ENCODE measurements at regions of chr7 and their contacts with region 1.

Region 1: DNA sequence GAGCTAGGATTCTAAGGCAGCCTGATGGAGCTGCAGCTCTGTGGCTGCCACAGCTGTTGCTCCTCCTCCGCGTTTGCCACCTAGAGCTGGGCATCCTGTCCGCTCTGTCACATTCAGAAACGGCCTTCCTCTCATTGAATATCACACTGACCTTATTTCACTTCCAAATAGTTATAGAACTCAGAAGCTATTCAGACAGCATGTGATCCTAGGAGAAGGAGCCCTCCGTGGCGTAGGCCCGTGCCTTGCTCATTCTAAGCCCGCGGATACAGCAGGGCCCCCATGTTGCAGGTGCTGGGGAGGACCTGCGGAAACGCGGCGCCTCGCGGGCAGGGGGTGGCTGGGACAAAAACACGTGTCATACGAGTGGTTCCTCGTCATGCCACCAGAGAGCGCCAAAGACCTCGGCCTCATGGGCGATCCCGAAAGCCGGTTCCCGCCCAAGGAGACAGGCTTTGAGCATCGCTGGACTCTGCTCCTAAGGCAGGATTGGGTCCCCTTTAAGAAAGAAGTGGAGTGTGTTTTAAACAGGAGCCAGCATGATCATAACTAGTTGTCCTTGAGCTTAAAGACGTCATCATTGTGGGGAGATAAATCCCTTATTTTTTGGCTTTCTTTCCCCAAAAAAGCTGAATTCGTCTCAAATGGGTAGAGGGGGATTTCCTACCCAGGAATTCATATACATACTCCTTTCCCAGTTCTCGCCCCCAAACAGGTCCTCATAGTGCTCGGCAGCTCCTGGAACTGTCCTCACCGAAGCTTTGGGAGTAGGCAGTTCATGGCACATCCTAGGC is 17.9 kb upstream of the FIGNL1 start:
- DNase-seq: peak; percentile 73 to 81 (median 81)
- H3K4me3 ChIP-seq: peak overlapping the region in 2 of 7 experiments; percentile 36 to 65
- H3K27ac ChIP-seq: no peak overlapping the region
- H3K4me1 ChIP-seq: peaks cover 0 to 10% (median 6%) of the 10 kb centered on the region in 4 experiments
- H3K27me3 ChIP-seq: no peaks in the 10 kb centered on the region

Region 2: DNA sequence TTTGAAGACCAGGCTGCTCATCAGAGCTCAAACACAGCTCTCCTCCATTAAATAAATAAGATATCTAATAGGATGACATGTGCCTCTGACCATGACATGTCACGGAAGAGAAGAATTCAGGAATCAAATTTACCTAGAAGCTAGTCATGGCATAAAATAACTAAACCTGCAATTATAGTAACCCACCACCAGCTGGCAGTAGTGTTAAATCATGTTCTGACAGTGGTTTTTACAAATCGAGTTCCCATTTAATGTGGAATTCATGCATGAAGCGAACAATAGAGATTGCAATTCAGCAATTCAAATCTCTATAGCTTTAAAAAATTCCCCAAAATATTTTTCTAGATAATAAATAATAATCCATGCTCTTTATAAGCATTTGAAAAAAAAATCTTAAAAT is 238.1 kb before region 1 on chr7:
- CTCF ChIA-PET with region 1: no interaction called
- POLR2A ChIA-PET with region 1: no interaction called
- DNase-seq: peak; percentile 43 to 76 (median 72)
- H3K4me3 ChIP-seq: no peak overlapping the region
- H3K27ac ChIP-seq: no peak overlapping the region
- H3K4me1 ChIP-seq: peaks cover 15 to 34% (median 25%) of the 10 kb centered on the region in 4 experiments
- H3K27me3 ChIP-seq: no peaks in the 10 kb centered on the region

Region 3: DNA sequence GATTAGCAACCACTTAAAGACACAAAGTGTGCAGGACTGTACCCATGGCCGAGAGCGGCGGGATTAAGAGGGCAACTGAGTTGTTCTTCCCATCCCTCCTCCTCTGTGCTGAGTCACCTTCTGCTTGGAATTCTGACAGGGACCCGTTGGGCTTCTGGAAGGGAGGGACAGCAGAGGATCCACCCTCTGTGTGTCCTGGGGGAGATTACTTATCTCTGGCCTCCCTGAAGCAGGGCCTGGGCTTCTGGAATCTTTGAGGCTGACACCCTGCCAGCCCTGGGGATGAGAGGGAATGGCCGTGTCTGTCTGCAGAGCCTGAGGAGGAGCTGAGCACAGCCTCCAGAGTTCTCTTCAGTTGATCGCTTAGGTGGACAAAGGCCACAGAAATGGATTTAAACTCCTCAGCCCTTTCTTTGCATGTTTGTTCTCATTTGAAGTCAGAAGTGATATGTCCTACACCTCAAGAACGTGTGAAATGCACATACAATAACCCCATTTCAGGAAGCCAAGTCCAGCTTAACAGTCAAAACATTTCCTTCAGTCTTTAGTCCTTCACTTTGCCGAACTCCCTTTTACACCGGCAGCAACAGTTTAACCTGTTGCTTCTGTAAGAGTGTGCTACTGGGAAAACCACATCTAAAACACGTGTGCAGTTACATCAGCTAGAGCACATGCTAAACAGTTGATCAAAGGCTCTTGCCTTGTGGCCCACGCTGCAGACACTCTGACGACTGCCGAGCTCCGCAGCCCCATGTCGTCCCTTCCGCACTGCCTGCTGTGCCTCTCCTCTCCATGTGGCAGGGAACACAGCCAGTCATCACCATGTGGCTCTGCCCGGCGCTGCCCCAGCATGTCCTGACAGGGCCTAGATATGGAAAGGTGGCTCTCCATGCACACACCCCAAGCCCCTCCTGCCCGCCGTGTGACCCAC is 107.8 kb before region 1 on chr7:
- CTCF ChIA-PET with region 1: no interaction called
- POLR2A ChIA-PET with region 1: no interaction called
- DNase-seq: no peak
- H3K4me3 ChIP-seq: no peak overlapping the region
- H3K27ac ChIP-seq: peak overlapping the region in 1 of 2 experiments; percentile 74
- H3K4me1 ChIP-seq: peaks cover 19 to 95% (median 83%) of the 10 kb centered on the region in 4 experiments
- H3K27me3 ChIP-seq: no peaks in the 10 kb centered on the region

Region 4: DNA sequence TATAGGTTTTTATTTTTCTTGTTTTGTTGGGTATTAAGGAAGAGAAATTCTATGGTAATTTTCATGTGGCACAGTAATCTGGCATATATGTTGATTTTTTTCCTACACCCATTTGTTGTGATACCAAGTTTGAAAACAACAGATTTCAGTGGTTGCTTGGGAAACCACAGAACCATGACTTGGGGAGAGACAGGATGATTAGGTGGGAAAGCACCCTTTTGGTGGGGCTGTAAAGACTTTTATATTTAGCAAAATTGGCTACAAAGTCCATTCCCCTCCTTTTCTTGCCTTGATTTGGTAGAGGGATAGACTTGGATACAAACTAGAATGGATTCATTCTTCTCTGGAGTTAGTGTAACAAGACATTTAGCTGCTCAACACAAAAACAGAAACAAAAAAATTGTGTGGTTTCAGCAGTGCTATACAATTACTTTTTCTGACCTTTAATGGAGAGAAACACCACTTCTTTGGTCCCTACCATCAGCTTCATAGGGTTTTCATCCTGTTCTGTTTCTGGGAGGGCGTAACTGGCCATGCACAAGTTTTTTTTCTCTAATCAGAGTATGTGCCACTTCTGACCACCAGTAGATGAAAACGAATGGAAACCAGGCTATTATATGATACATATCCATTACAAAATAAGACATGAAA is 70.6 kb before region 1 on chr7:
- CTCF ChIA-PET with region 1: no interaction called
- POLR2A ChIA-PET with region 1: no interaction called
- DNase-seq: peak in 2 of 3 donors; percentile 29 to 34
- H3K4me3 ChIP-seq: no peak overlapping the region
- H3K27ac ChIP-seq: peak overlapping the region in 1 of 2 experiments; percentile 15
- H3K4me1 ChIP-seq: peaks cover 0 to 27% (median 15%) of the 10 kb centered on the region in 4 experiments
- H3K27me3 ChIP-seq: no peaks in the 10 kb centered on the region

Region 5: DNA sequence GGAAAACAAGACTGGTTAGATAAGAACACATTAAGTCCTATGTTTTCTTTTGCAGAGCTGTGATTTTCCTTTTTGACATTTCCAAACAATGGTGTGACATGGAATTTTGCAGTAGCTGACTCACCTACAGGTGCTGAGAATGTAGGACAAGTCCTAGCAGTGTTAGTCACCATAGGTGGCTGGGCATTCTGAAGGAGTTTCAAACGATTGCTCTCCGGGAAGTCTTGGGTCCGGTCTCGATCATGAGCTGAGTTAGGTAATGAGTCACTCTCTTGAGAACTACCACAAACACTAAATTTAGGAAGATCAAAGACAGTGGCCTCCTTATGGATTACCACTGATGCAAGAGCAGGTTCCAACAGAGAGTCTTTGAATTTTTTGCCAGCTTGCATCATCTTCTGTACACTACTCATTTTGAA is 21.5 kb before region 1 on chr7:
- CTCF ChIA-PET with region 1: interaction called, 11 read pairs
- POLR2A ChIA-PET with region 1: no interaction called
- DNase-seq: no peak
- H3K4me3 ChIP-seq: no peak overlapping the region
- H3K27ac ChIP-seq: no peak overlapping the region
- H3K4me1 ChIP-seq: peaks cover 4 to 24% (median 18%) of the 10 kb centered on the region in 4 experiments
- H3K27me3 ChIP-seq: no peaks in the 10 kb centered on the region

Region 6: DNA sequence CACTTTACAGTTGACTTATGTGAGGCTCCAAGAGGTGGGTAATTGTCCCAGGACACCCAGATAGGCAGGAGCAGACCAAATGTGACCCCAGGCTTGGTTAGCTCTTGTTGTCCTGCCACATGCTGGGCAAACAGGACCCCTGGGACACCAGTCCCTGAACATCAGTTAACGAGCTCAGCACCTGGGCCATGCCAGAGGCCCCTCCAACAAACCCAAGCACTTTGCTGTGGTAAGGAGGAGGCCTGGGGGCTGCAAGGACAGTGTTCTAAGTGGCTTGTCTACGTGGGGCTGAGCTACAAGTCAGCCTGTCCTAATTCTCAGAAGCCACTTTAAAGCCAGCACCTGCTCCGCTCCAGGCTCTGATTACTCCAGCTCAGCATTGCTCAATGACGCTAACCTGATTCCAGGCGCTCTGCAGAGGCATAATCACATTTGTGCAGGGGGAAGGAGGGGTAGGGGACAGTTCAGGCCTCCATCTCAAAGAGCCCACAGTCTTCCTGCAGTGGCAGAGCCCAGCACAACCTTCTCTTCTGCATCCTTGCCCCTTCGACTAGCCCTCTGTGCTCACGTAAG is 40.0 kb after region 1 on chr7:
- CTCF ChIA-PET with region 1: interaction called, 11 read pairs
- POLR2A ChIA-PET with region 1: interaction called, 6 read pairs
- DNase-seq: peak in 1 of 3 donors; percentile 20
- H3K4me3 ChIP-seq: no peak overlapping the region
- H3K27ac ChIP-seq: no peak overlapping the region
- H3K4me1 ChIP-seq: peaks cover 6 to 25% (median 10%) of the 10 kb centered on the region in 4 experiments
- H3K27me3 ChIP-seq: no peaks in the 10 kb centered on the region

Region 7: DNA sequence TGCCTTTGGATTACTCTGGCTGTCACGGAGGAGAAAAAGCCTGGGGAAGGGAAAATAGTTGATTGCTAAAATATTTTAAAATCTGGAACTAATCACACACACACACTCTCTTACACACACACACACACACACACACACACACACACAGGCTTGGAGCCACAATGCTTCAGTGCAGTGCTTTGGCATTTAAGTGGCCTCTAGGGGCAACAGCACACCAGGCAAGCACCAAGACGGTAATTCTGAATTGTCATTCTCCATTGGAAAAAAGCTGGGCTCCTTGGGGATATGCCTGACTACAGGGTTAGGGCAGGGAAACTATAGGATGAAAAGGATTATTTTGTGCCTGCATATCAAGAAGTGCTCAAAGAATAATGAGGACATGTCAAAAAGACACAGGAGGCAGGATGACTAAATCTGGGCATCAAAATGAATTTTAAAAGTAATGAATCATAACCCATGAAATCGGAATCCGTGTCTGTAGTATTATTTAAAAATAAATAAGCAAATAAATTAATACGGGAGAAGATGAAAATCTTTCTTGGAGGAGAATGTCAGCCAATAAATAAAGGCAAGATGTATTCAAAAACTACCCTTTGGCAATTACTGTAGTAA is 127.6 kb after region 1 on chr7:
- CTCF ChIA-PET with region 1: interaction called, 21 read pairs
- POLR2A ChIA-PET with region 1: no interaction called
- DNase-seq: peak; percentile 45 to 72 (median 53)
- H3K4me3 ChIP-seq: no peak overlapping the region
- H3K27ac ChIP-seq: no peak overlapping the region
- H3K4me1 ChIP-seq: no peaks in the 10 kb centered on the region
- H3K27me3 ChIP-seq: no peaks in the 10 kb centered on the region

Region 8: GRCh38 chr7:50632561-50633413 is 164.8 kb after region 1 on chr7:
- CTCF ChIA-PET with region 1: interaction called, 14 read pairs
- POLR2A ChIA-PET with region 1: no interaction called
- DNase-seq: peak; percentile 35 to 65 (median 62)
- H3K4me3 ChIP-seq: no peak overlapping the region
- H3K27ac ChIP-seq: no peak overlapping the region
- H3K4me1 ChIP-seq: peaks cover 0 to 4% (median 0%) of the 10 kb centered on the region in 4 experiments
- H3K27me3 ChIP-seq: no peaks in the 10 kb centered on the region

Region 9: GRCh38 chr7:50679218-50680007 is 211.4 kb after region 1 on chr7:
- CTCF ChIA-PET with region 1: interaction called, 40 read pairs
- POLR2A ChIA-PET with region 1: no interaction called
- DNase-seq: peak; percentile 54 to 73 (median 70)
- H3K4me3 ChIP-seq: no peak overlapping the region
- H3K27ac ChIP-seq: no peak overlapping the region
- H3K4me1 ChIP-seq: peaks cover 2 to 22% (median 18%) of the 10 kb centered on the region in 4 experiments
- H3K27me3 ChIP-seq: no peaks in the 10 kb centered on the region

Region 10: GRCh38 chr7:51029701-51030191 is 561.7 kb after region 1 on chr7:
- CTCF ChIA-PET with region 1: no interaction called
- POLR2A ChIA-PET with region 1: no interaction called
- DNase-seq: no peak
- H3K4me3 ChIP-seq: no peak overlapping the region
- H3K27ac ChIP-seq: no peak overlapping the region
- H3K4me1 ChIP-seq: no peaks in the 10 kb centered on the region
- H3K27me3 ChIP-seq: no peaks in the 10 kb centered on the region

Region 11: DNA sequence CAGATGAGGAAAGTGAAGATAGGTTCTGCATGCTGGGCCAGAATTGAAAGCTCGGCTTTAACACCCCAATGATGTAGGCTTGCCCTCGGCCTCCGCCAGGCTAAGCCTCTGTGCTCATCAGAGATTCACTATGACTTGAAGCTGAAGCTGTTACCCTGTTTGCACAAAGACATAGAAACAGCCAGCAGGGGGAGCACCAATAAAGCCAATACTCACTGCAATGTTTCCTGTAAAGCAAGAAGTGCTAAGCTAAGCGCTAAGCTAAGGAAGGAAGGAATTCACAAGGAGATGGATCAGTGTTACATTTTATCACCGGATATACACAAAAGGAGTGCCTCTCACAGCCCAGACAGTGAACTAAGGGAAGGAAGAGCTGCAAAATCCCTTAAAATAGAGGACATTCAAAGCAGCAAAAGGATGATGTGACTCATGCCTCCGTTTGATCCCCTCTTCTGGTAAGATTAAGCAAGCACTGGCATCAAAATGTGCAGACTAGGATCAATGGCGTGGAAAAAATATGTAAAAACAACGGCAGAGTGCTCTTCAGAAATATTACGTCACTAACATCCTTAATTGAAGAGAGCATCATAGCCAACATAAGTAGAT is 694.8 kb after region 1 on chr7:
- CTCF ChIA-PET with region 1: interaction called, 42 read pairs
- POLR2A ChIA-PET with region 1: no interaction called
- DNase-seq: peak; percentile 85 to 91 (median 87)
- H3K4me3 ChIP-seq: no peak overlapping the region
- H3K27ac ChIP-seq: no peak overlapping the region
- H3K4me1 ChIP-seq: peaks cover under 1 to 18% (median 12%) of the 10 kb centered on the region in 4 experiments
- H3K27me3 ChIP-seq: peaks cover 0 to 2% (median 0%) of the 10 kb centered on the region in 5 experiments

Measured in common myeloid progenitor, CD34-positive (primary cell).